Activated naive CD4-positive, alpha-beta T cell treated with anti-CD3 and anti-CD28 coated beads for 36 hours (primary cell): ENCODE measurements at regions of chr2 and their contacts with region 1.

Region 1: GRCh38 chr2:224927646-224928173 is 114.6 kb downstream of the DOCK10 start:
- DNase-seq: peak; percentile 86
- H3K4me3 Mint-ChIP-seq: peak overlapping the region; percentile 58
- H3K27ac Mint-ChIP-seq: peak overlapping the region; percentile 98
- H3K4me1 Mint-ChIP-seq: peaks cover 97% of the 10 kb centered on the region
- H3K27me3 Mint-ChIP-seq: no peaks in the 10 kb centered on the region

Region 2: GRCh38 chr2:223957092-223957851 is 970.4 kb before region 1 on chr2 and contains the start of gene MRPL44:
- CTCF ChIA-PET with region 1: no interaction called
- intact Hi-C with region 1: loop called (anchors 5 kb)
- DNase-seq: peak; percentile 97
- H3K4me3 Mint-ChIP-seq: peak within 1 kb of the TSS; percentile 91
- H3K27ac Mint-ChIP-seq: peak within 1 kb of the TSS; percentile 88
- H3K4me1 Mint-ChIP-seq: peaks cover 80% of the 10 kb centered on the region
- H3K27me3 Mint-ChIP-seq: no peaks in the 10 kb centered on the region
- total RNA-seq, gene MRPL44: 39.1 to 41.3 TPM

Region 3: GRCh38 chr2:224585205-224586088 is 342.3 kb before region 1 on chr2 and contains the start of gene CUL3:
- CTCF ChIA-PET with region 1: no interaction called
- intact Hi-C with region 1: loop called (anchors 2 kb)
- DNase-seq: peak; percentile 100
- H3K4me3 Mint-ChIP-seq: peak within 1 kb of the TSS; percentile 92
- H3K27ac Mint-ChIP-seq: peak within 1 kb of the TSS; percentile 89
- H3K4me1 Mint-ChIP-seq: peaks cover 31% of the 10 kb centered on the region
- H3K27me3 Mint-ChIP-seq: no peaks in the 10 kb centered on the region
- total RNA-seq, gene CUL3: 61.7 to 66.0 TPM

Region 4: DNA sequence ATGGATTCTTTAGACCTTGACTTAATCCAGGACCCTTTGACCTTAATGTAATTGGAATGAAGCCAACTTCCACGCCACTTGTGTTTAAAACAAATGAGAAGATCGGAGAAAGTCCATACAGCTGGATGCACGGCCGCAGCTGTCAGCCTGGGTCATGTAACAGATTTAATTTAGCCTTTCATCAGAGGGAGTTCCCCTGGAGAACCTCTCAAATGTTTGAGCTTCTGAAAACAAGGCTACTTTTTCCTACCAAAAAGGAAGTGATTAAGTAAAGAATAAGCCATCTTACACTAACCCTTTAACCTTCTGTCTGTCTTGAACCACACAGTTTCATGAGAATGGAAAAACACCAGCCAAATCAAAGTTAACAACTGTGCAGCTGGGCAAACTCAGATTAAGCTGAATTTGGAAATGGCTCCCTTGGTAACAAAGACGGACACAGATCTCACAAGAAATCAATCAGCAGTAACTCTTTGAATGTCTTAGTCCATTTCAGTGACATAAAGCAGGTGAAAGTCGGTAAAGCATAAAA is 11.0 kb after region 1 on chr2:
- CTCF ChIA-PET with region 1: interaction called, 66 read pairs
- intact Hi-C with region 1: loop called (anchors 1 kb)
- DNase-seq: peak; percentile 53
- H3K4me3 Mint-ChIP-seq: peak overlapping the region; percentile 59
- H3K27ac Mint-ChIP-seq: peak overlapping the region; percentile 89
- H3K4me1 Mint-ChIP-seq: peaks cover 80% of the 10 kb centered on the region
- H3K27me3 Mint-ChIP-seq: no peaks in the 10 kb centered on the region

Region 5: DNA sequence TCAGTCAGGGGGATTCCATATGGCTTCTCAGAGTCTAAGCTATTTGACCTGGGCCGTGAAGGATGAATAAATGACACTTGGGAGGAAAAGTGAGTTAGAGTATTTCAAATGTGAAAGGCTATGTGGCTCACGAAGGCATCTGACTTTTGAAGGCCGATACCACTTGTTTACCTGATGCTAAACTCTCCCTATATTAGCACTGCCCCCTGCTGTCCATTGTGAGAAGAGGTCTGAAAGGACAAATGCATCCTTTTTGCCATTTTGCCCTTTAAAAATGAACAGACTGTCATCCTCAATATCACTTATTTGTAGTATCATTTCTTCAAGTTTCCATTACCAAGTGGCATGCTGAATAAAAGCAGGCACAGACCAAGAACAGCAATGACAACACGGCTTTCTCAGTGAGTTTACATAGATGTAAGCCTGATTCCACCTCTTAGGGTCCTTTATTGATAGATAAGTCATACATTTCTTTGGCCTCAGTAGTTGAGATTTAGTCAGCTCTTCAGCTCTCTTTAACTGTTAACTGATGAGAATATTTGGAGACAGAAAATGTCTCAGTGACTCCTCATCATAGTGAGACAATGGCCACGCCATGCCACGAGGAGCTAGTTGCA is 74.4 kb after region 1 on chr2:
- CTCF ChIA-PET with region 1: interaction called, 34 read pairs
- intact Hi-C with region 1: loop called (anchors 1 kb)
- DNase-seq: peak; percentile 84
- H3K4me3 Mint-ChIP-seq: peak overlapping the region; percentile 22
- H3K27ac Mint-ChIP-seq: peak overlapping the region; percentile 86
- H3K4me1 Mint-ChIP-seq: peaks cover 83% of the 10 kb centered on the region
- H3K27me3 Mint-ChIP-seq: no peaks in the 10 kb centered on the region

Region 6: DNA sequence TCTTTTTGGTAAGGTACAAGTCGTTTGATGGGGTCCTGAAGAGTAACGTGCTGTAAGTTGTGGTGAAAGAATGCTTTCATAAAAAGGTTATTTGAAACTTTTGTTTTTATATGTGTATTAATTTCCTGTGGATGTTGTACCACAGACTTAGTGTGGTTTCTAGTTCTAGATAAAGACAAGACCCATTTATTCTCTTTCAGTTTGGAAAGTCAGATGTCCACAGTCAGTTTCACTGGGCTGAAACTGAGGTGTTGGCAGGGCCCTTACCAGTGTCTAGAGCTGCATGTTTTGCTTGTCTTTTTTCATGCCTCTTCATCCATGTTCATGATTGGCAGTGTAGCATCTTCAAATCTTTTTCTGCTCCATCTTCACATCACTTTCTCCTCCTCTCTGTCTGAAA is 136.7 kb after region 1 on chr2:
- CTCF ChIA-PET with region 1: no interaction called
- intact Hi-C with region 1: loop called (anchors 1 kb)
- DNase-seq: no peak
- H3K4me3 Mint-ChIP-seq: no peak overlapping the region
- H3K27ac Mint-ChIP-seq: no peak overlapping the region
- H3K4me1 Mint-ChIP-seq: peaks cover 45% of the 10 kb centered on the region
- H3K27me3 Mint-ChIP-seq: no peaks in the 10 kb centered on the region

Region 7: GRCh38 chr2:226835796-226836547 is 1908.3 kb after region 1 on chr2 and contains the start of gene RHBDD1:
- CTCF ChIA-PET with region 1: no interaction called
- intact Hi-C with region 1: loop called (anchors 5 kb)
- DNase-seq: peak; percentile 93
- H3K4me3 Mint-ChIP-seq: peak within 1 kb of the TSS; percentile 92
- H3K27ac Mint-ChIP-seq: peak within 1 kb of the TSS; percentile 98
- H3K4me1 Mint-ChIP-seq: peaks cover 55% of the 10 kb centered on the region
- H3K27me3 Mint-ChIP-seq: no peaks in the 10 kb centered on the region
- total RNA-seq, gene RHBDD1: 42.6 to 43.3 TPM